GM10248 (cell line): ENCODE measurements at regions of chr11 and their contacts with region 1.

Region 1: DNA sequence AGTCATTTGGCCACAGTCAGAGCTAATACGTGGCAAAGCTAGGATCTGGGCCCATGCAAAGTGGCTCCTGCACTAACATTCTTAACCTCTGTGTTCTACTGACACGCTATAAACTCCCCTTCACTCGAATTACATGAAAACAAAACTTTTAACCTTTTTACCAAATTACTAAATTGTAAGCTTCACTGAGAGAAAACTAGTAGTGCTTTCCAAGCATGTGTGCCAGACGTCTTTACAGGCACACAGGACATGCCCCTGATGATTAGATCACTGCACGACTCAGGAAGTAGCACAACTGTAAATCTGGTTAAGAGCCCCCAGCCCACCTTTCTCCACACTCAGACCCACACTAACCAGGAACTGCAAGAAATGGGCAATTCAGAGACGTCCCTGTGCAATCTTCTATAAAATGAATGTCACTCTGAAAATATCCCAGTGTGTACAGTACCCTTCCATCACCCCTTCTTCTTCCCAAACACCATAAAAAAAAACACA is 16.1 kb downstream of the PHF21A start:
- DNase-seq: no peak
- CTCF ChIP-seq: no peak

Region 2: DNA sequence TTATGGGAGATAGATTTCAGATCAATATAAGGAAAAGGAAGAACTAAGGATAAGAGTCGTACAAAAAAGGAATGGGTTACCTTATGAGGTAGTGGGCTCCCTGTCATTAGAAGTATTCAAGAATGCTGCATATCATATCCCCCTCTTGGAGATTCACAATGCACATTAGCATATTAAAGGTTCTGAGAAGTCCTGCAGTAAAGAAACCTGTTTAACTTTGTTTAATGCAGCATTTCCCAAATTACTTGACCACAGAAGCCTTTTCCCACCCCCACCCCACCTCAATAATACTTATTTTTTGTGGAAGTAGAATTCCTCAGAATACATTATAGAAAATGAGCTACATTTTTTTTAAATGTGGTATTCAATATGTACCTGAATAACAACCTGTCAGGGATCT is 14.8 kb before region 1 on chr11:
- CTCF ChIA-PET with region 1: interaction called, 25 read pairs
- POLR2A ChIA-PET with region 1: no interaction called
- DNase-seq: no peak
- CTCF ChIP-seq: no peak

Region 3: DNA sequence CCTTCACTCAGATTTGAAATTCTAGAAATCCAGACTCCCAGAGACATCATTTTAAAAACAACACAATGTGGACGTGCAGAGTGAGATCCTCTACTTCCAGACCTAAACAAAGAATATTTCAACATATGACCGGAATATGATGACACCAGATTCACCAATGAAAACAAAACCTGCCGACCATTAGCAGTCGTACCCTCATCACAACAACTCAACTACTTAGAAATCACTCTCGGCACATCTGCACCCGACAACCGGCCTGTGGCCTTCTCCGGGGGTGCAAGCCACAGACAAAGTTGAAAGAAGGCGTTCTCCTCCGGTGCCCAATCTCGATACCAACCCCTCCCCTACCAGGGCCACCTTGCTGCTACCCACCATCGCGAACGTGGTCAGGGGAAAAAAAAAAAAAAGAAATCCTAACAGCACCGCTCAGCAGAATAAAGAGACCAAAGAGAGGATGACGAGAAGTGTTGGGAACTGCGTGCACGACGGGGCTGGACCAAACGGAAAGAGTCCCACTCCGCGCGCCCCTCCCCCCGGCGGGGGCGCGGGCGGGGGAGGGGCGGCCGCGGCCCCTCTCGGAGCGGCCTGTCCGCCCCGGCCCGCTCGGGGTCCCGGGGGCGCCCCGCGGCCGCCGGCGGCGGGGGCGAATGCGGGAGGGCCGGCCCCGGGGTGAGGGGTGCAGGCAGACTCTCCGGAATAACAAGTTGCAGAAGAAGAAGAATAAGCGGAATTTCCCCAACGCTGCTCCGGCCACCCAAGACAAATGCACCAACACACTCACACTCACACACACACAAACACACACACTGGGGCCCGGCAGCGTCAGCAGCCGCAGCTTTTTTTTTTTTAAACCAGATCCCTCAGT is 14.4 kb after region 1 on chr11:
- CTCF ChIA-PET with region 1: interaction called, 15 read pairs
- POLR2A ChIA-PET with region 1: no interaction called
- DNase-seq: peak; percentile 59
- CTCF ChIP-seq: no peak

Region 4: GRCh38 chr11:46272816-46273427 is 167.7 kb after region 1 on chr11:
- CTCF ChIA-PET with region 1: no interaction called
- POLR2A ChIA-PET with region 1: no interaction called
- DNase-seq: no peak
- CTCF ChIP-seq: no peak

Region 5: DNA sequence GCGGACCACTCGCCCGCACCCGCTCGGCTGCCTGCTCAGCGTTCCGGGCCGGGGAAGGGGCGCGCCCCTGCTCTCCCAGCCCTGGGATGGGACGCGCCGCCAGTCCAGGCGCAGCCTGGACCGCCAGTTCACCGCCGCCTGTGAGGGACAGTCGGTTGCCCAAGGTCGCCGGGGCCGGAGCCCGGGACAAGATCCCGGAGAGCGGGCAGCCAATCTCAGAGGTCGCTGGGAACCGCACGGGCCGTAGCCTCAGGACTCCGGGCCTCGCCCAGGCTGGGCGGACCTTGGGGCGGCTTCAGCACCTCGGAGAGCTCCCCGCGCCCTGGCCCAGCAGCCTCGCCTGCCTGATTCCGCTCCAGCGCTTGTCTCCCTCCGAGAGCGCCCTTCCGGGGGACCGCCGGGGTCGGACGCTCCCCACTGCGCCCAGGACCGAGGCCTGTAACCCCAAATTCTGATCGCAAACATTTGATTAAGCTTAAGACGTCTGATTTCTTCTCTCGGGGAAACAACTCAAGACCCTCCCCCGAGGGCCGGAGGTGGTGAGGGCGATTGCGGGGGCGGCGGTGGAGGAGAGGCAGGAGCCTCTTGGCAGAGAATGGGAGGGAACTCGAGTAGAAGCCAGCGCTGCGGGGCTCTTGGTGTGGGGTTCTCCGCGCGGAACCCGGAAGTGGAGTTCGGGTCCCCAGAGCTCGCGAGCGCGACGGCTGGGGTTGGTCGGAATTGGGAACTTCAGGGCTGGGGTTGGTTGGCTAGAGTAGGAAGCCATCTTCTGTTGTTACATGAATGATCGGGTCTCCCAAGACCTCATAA is 287.4 kb after region 1 on chr11:
- CTCF ChIA-PET with region 1: no interaction called
- POLR2A ChIA-PET with region 1: no interaction called
- DNase-seq: peak; percentile 95
- CTCF ChIP-seq: no peak